ENCODE measurements at regions of chr14 and their contacts with region 1.

Region 1: DNA sequence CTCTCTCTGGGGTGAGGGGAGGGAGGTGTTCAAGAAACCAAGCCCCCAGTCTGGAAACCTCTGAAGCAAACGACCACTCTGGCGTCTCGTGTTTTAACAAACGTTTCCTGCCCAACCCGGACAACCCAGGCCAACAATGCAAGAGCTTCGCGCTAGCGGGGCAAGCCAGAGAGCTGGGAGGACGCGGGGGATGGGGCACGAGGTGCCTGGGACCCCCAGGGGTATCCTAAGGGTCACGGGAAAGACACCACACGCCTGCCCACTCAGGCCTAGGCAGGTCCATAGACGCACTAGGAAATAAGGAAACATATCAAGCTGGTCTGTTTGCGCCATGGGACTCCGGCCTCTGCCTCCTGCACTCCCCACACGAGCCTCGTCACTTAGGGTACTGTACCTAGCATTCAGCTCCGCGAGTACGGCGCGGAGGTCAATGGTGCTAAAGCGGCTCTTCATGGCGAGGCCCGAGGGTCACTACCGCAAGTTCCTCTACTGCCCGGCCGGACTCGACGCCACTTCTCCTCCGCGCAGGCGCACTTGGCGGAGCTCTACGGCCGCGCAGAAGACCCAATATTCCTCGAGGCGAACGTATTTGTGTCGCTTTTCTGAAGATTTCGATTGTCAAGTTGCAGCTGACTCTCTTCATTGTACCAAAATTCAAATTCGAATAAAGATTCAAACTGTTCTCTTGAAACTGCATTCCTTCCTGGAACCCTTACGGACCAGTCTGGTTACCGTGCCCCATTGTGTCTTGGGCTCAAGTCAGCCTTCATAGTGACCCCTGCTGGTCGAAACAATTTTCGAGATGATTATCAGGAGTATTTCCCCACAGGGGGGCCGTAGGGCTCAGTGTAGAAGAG is at the start of gene NEMF:
- H3K4me3 Mint-ChIP-seq: peak within 1 kb of the TSS; percentile 95
- H3K27ac Mint-ChIP-seq: peak within 1 kb of the TSS; percentile 99
- H3K4me1 Mint-ChIP-seq: peaks cover 27% of the 10 kb centered on the region
- H3K27me3 Mint-ChIP-seq: no peaks in the 10 kb centered on the region

Region 2: GRCh38 chr14:50116181-50116956 is 263.8 kb after region 1 on chr14 and contains the start of gene VCPKMT:
- intact Hi-C with region 1: loop called (anchors 5 kb)
- H3K4me3 Mint-ChIP-seq: peak within 1 kb of the TSS; percentile 88
- H3K27ac Mint-ChIP-seq: peak within 1 kb of the TSS; percentile 93
- H3K4me1 Mint-ChIP-seq: peaks cover 5% of the 10 kb centered on the region
- H3K27me3 Mint-ChIP-seq: no peaks in the 10 kb centered on the region